ENCODE measurements at regions of chr1 and their contacts with region 1.

Region 1: GRCh38 chr1:117798550-117798949 is 130.9 kb downstream of the GDAP2 start:
- DNase-seq: no peak

Region 2: DNA sequence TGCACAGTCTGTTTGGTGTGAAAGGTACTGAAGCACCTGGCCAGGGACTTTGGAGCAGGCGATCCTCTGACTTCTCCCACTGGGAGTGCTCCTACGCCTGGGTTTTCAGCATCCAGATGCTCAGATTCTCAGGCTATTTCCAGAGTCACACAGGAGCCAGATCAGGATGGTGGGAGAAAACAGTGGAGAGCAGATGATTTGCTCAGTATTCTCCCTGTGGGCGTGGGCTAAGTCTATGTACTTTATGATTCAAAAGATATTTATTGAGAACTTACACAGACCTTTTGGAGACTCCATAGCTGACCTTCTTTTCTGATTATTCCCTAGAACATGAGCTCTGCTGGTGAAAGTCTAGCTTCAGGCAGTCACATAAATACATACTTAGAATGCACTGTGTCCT is 58.1 kb before region 1 on chr1:
- intact Hi-C with region 1: loop called in 1 of 2 experiments (anchors 2 kb)
- DNase-seq: no peak

Region 3: DNA sequence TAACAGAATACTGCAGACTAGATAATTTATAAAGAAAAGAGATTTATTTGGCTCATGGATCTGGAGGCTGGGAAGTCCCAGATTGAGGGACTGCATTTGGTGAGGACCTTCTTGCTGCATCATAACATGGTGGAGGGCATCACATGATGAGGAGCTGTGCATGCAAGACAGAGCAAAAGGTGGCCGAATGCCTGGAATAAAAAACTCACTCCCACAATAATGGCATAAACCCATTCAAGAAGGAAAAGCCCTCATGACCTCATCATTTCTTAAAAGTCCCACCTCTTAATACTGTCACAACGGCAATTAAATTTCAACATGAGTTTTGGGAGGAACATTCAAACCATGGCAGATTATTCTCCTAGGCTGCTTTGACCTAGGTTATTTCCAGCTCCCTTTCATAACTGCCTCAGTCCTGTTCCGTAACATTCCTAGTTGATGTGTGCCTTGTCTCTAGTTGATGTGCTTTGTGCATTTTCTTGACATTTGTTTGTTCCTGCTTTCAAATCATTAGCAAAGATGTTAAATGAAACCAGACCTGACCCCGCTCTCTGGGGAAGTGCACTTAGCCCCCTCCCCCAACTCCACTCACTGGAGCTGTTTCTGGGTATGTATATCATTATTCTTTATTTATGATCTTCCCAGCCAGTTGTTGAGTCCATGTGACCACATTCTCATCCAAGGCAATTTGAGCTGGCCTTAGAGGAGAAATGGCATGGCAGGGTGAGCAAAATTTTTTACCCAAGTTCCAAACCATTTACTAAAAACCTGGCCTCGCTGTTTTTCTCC is 17.7 kb before region 1 on chr1:
- intact Hi-C with region 1: no loop called
- DNase-seq: no peak

Region 4: GRCh38 chr1:118688891-118689290 is 890.3 kb after region 1 on chr1:
- intact Hi-C with region 1: no loop called
- DNase-seq: no peak